PC-3 (cell line): ENCODE measurements at regions of chr16 and their contacts with region 1.

Region 1: GRCh38 chr16:75305364-75306098 is 54.1 kb upstream of the BCAR1 start:
- DNase-seq: peak; percentile 98
- ATAC-seq: peak; percentile 94
- H3K4me3 ChIP-seq: peak overlapping the region; percentile 30; the same call in 1 of the 2 replicates
- H3K27ac ChIP-seq: peak overlapping the region; percentile 99
- H3K4me1 ChIP-seq: peaks cover 26% of the 10 kb centered on the region
- H3K27me3 ChIP-seq: no peaks in the 10 kb centered on the region
- CTCF ChIP-seq: peak; percentile 26; the same call in 1 of the 2 replicates

Region 2: GRCh38 chr16:75244844-75245758 is 60.4 kb before region 1 on chr16:
- CTCF ChIA-PET with region 1: interaction called, 8 read pairs
- POLR2A ChIA-PET with region 1: interaction called, 7 read pairs
- intact Hi-C with region 1: loop called (anchors 1 kb)
- DNase-seq: peak; percentile 94
- ATAC-seq: peak; percentile 73
- H3K4me3 ChIP-seq: no peak overlapping the region
- H3K27ac ChIP-seq: peak overlapping the region; percentile 86
- H3K4me1 ChIP-seq: peaks cover 63% of the 10 kb centered on the region
- H3K27me3 ChIP-seq: no peaks in the 10 kb centered on the region
- CTCF ChIP-seq: no peak

Region 3: GRCh38 chr16:75279305-75279704 is 26.2 kb before region 1 on chr16:
- CTCF ChIA-PET with region 1: no interaction called
- POLR2A ChIA-PET with region 1: no interaction called
- intact Hi-C with region 1: no loop called
- DNase-seq: peak; percentile 34
- ATAC-seq: peak; percentile 56
- H3K4me3 ChIP-seq: no peak overlapping the region
- H3K27ac ChIP-seq: no peak overlapping the region
- H3K4me1 ChIP-seq: peaks cover 6% of the 10 kb centered on the region; the same call in 1 of the 2 replicates
- H3K27me3 ChIP-seq: no peaks in the 10 kb centered on the region
- CTCF ChIP-seq: no peak

Region 4: DNA sequence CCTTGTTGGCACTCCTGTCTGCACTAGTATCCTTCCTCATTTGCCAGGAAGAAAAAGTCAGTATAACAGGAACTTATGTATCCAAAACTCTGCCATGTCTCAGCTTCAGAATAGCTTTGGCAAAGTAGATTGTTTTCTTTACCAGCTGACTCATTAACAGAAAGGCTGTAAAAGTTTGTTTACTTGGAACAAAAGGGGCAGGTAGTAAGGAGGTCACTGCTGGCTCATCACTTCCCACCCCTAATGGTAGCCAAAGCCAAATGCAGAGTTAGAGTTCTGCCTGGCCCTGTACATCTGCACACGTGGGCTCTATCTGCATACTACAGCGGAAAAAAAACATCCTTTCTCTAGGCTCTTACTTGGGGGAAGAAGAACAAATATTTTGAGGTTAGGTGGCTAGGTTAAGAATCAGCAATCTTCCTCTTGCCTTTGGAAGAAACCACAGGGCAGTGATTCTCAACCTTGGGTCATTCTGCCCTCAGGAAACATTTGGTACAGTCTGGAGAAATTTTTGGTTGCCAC is 36.8 kb after region 1 on chr16:
- CTCF ChIA-PET with region 1: no interaction called
- POLR2A ChIA-PET with region 1: no interaction called
- intact Hi-C with region 1: loop called (anchors 2 kb)
- DNase-seq: peak; percentile 88
- ATAC-seq: peak; percentile 95
- H3K4me3 ChIP-seq: no peak overlapping the region; the same call in 1 of the 2 replicates
- H3K27ac ChIP-seq: peak overlapping the region; percentile 85
- H3K4me1 ChIP-seq: peaks cover 40% of the 10 kb centered on the region
- H3K27me3 ChIP-seq: no peaks in the 10 kb centered on the region
- CTCF ChIP-seq: no peak

Region 5: GRCh38 chr16:75377729-75378386 is 72.3 kb after region 1 on chr16:
- CTCF ChIA-PET with region 1: interaction called, 3 read pairs
- POLR2A ChIA-PET with region 1: interaction called, 3 read pairs
- intact Hi-C with region 1: loop called (anchors 1 kb)
- DNase-seq: peak; percentile 74
- ATAC-seq: peak; percentile 79
- H3K4me3 ChIP-seq: no peak overlapping the region
- H3K27ac ChIP-seq: peak overlapping the region; percentile 80
- H3K4me1 ChIP-seq: peaks cover 22% of the 10 kb centered on the region
- H3K27me3 ChIP-seq: no peaks in the 10 kb centered on the region
- CTCF ChIP-seq: no peak

Region 6: DNA sequence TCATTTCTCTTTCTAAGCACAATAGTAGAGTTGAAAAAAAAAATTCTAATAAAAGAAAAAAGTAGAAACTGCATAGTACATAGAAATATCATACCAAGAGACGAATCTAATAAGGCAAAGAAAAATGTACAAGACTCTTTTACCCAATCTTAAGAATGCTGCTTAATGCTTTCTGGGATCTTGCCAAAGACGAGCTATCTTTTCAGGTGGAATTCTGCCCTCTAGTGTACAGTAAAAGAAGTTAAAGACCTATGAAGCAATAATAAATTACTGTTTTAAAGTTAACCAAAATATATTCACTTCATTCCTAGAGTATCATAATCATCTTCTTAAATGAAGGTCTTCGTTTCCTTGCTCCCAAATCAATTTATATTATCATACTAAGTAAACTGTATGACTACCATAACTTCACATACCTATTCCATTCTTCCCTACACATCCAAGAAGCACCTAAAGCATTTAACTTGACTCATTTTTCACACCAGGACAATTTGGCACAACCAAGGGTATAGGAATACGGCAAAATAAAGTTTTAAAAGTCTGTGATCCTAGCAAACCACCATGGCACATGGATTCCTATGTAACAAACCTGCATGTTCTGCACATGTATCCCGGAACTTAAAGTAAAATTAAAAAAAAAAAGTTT is 80.1 kb after region 1 on chr16:
- CTCF ChIA-PET with region 1: interaction called, 8 read pairs
- POLR2A ChIA-PET with region 1: interaction called, 3 read pairs
- intact Hi-C with region 1: loop called (anchors 1 kb)
- DNase-seq: peak; percentile 73
- ATAC-seq: no peak
- H3K4me3 ChIP-seq: no peak overlapping the region
- H3K27ac ChIP-seq: no peak overlapping the region
- H3K4me1 ChIP-seq: no peaks in the 10 kb centered on the region; the same call in 1 of the 2 replicates
- H3K27me3 ChIP-seq: no peaks in the 10 kb centered on the region
- CTCF ChIP-seq: peak; percentile 71

Region 7: GRCh38 chr16:75584108-75584507 is 278.6 kb after region 1 on chr16:
- CTCF ChIA-PET with region 1: no interaction called
- POLR2A ChIA-PET with region 1: no interaction called
- intact Hi-C with region 1: no loop called
- DNase-seq: no peak
- ATAC-seq: no peak
- H3K4me3 ChIP-seq: no peak overlapping the region
- H3K27ac ChIP-seq: no peak overlapping the region
- H3K4me1 ChIP-seq: no peaks in the 10 kb centered on the region
- H3K27me3 ChIP-seq: no peaks in the 10 kb centered on the region
- CTCF ChIP-seq: no peak